ENCODE measurements at regions of chr1 and their contacts with region 1.

Region 1: DNA sequence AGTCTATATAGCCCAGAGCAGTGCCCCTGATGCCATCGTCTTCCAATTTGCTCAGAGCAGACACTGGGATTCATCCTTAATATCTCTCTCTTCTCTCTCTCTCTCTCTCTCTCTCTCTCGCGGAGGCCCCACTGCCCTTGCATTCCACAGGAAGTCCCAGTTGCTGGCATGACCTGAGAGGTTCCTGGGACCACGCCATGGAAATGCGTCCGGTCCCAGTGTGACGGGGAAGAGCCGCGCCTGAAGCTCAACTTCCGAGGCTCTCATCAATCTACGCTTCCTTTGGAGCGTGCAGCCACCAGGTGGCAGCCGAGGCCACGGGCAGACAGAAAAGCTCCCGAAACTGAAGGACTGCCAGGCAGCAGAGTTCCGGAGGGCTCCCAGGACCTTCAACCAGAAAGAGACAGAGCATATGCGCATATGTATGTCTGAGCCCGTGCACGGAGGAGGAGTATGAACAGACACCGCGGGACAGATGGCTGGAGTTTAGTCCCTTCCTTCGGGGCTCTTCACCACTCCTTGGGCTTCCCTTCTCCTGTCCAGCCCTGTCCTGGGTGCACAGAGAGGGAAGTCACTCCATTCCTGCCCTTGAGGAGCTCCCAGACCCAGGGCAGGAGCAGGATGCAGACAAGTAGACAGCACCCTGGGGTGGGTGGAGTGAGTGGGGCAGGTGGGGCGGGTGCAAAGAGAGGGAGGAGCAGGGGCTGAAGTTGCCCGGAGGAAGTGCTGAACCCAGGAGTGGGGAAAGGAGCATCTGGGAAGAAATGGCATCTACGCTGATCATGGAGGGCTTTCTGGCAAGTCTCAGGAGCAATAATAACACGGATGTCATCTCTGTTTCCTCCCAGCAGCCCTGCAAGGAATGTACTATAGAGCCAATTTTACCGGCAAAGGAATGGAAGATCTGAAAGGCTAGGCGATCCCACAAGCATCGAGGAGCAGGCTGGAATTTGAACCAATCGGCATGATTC is 10.5 kb downstream of the PDZK1IP1 start:
- DNase-seq: peak; percentile 74
- ATAC-seq: peak; percentile 88
- H3K4me3 ChIP-seq: peak overlapping the region; percentile 35 to 69
- H3K27ac ChIP-seq: peak overlapping the region; percentile 52; the same call in 1 of the 2 replicates
- H3K4me1 ChIP-seq: no peaks in the 10 kb centered on the region
- H3K27me3 ChIP-seq: no peaks in the 10 kb centered on the region; the same call in 1 of the 2 replicates
- CTCF ChIP-seq: peak; percentile 93

Region 2: DNA sequence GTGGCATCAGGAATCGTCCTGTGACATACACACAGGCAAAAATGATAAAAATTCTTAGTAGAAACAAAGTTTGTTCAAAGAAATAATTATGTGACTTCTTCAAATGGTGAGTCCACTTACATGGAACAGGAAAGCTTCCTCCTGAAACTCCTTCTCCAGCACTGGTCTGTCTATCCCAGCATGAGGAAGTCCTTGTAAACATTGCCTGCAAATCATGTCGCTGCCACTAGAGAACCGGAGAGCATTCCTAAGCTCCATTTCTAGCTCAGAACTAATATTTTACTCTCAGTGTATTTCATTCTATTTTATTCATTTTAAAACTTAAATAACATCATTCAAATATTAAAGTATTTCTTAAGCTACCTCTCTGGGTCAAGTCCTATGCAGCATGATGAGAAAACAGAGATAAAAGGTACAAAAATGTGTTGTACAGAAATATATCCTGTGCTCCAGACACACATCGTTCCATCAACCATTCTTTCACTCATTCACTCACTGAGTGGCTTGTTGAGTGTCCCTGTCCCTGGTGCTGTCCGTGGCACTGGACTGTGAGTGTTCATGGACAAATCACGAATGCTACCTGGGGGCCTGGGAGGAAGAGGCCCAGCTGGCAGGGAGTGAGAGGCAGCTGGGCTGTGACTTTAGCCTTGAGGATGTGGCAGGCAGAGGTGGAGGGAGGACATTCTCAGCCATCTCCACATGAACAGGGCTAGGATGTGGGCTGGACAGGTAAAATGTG is 32.1 kb before region 1 on chr1:
- CTCF ChIA-PET with region 1: no interaction called
- POLR2A ChIA-PET with region 1: no interaction called
- in situ Hi-C with region 1: no loop called
- intact Hi-C with region 1: no loop called
- DNase-seq: no peak
- ATAC-seq: no peak
- H3K4me3 ChIP-seq: no peak overlapping the region
- H3K27ac ChIP-seq: no peak overlapping the region
- H3K4me1 ChIP-seq: no peaks in the 10 kb centered on the region
- H3K27me3 ChIP-seq: no peaks in the 10 kb centered on the region
- CTCF ChIP-seq: no peak

Region 3: GRCh38 chr1:47192458-47193384 is 13.4 kb after region 1 on chr1:
- CTCF ChIA-PET with region 1: interaction called, 14 read pairs
- POLR2A ChIA-PET with region 1: no interaction called
- in situ Hi-C with region 1: no loop called
- intact Hi-C with region 1: no loop called
- DNase-seq: peak; percentile 53
- ATAC-seq: peak; percentile 79
- H3K4me3 ChIP-seq: no peak overlapping the region
- H3K27ac ChIP-seq: no peak overlapping the region
- H3K4me1 ChIP-seq: no peaks in the 10 kb centered on the region
- H3K27me3 ChIP-seq: no peaks in the 10 kb centered on the region
- CTCF ChIP-seq: peak; percentile 97

Region 4: DNA sequence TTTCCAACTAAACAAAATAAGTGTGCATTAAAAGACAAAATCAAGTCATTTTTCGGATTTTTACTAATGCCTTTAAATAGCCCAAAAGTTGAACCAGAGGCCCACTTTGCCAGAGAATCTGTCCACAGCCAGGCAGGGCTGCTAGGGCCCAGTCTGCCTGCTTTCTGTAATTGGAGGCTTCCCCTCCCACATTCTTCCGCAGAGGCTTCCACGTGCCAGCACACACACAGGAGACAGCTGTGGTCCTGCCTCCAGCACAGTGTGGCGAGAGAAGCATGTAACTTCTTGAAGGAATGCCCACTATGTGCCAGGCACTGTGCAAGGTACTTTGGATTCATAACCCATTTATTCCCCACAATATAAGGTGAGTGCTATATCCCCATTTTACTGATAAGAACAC is 21.9 kb after region 1 on chr1:
- CTCF ChIA-PET with region 1: interaction called, 10 read pairs
- POLR2A ChIA-PET with region 1: no interaction called
- in situ Hi-C with region 1: no loop called
- intact Hi-C with region 1: no loop called
- DNase-seq: no peak
- ATAC-seq: no peak
- H3K4me3 ChIP-seq: no peak overlapping the region
- H3K27ac ChIP-seq: no peak overlapping the region
- H3K4me1 ChIP-seq: no peaks in the 10 kb centered on the region
- H3K27me3 ChIP-seq: peaks cover 5% of the 10 kb centered on the region
- CTCF ChIP-seq: no peak

Region 5: DNA sequence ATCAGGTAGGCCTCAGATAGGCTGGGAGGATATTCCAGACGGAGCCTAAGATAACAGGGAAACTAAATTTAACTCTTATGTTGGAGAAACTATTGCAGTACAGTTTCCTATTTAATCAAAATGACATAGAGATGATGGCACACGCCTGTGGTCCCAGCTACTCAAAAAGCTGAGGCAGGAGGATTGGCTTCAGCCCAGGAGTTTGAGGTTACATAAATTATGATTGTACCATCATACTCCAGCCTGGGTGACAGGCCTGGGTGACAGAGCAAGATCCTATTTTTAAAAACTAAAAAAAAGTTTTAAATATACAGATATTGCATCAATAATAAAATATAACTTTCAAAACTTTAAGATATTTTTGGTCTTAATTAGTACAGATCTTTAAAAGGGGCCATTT is 77.9 kb after region 1 on chr1:
- CTCF ChIA-PET with region 1: interaction called, 25 read pairs
- POLR2A ChIA-PET with region 1: no interaction called
- in situ Hi-C with region 1: no loop called
- intact Hi-C with region 1: no loop called
- DNase-seq: no peak
- ATAC-seq: no peak
- H3K4me3 ChIP-seq: no peak overlapping the region
- H3K27ac ChIP-seq: no peak overlapping the region
- H3K4me1 ChIP-seq: no peaks in the 10 kb centered on the region
- H3K27me3 ChIP-seq: no peaks in the 10 kb centered on the region
- CTCF ChIP-seq: no peak

Region 6: DNA sequence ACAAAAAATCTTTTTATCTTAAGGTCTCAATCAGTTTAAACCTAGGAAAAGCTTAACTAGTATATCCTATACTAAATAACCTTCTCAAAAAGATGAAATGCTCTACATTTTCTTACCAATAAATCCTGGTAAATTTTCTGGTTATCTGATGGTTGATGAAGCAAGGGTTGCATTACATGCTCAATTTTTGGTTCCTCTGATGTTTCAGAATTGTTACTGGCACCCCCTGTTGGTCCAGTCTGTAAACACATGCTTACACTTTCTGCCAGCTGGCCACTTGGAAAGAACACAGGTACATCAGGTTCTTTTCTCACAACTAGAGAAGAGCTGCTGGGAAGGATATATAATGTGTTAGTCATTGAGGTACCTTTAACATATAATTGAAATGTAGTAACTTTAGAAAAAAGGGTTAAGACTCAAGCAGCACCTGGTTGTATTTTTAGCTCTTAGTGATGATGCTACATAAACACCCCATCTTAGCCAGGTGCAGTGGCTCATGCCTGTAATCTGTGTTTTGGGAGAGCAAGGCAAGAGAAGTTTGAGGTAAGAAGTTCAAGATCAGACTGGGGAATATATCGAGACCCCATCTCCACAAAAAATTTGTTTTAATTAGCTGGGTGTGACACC is 83.6 kb after region 1 on chr1:
- CTCF ChIA-PET with region 1: interaction called, 25 read pairs
- POLR2A ChIA-PET with region 1: no interaction called
- in situ Hi-C with region 1: no loop called
- intact Hi-C with region 1: loop called (anchors 1 kb)
- DNase-seq: peak; percentile 33
- ATAC-seq: peak; percentile 79
- H3K4me3 ChIP-seq: no peak overlapping the region
- H3K27ac ChIP-seq: no peak overlapping the region
- H3K4me1 ChIP-seq: no peaks in the 10 kb centered on the region
- H3K27me3 ChIP-seq: no peaks in the 10 kb centered on the region
- CTCF ChIP-seq: peak; percentile 77

Measured in Panc1 (cell line).